Cardiac septum (tissue), 1 donor: ENCODE measurements at regions of chr5 and their contacts with region 1.

Region 1: DNA sequence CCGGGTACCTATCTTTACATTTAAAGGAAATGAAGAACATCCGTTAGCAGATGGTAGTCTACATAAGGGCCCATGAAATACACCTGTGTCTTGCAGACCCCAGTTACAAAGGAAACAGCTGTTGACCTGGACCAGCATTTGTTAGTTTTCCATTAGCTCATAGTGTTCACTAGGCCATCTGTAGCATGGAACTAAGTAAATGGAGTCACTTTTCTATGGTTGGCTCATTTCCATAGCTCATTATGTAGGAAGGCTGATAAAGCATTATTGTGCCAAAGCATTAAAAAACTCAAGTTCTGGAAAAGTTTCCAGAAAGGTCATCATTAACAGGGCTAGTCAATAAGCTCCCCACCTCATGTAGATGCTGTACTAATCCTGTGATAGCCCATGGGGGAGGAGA is 62.1 kb downstream of the PCSK1 start:
- DNase-seq: no peak

Region 2: DNA sequence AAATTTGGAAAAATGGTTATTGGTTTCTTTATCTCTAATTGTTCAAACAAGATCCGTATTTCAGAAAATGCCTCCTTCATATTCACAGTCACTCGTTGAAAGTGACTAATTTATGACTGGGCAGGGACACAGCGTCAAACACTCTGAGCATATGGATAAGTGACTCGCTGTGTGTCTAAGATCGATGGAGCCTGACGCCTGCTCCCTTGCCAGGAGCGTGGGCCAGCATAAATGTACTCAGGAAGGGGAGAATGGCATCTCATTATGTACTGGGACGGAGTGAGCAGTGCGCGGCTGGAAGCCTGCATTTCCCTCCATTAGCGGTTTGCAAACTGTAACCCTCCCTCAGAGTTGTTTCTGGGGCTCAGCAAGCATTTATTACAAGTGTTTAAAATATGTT is 211.4 kb after region 1 on chr5:
- intact Hi-C with region 1: loop called (anchors 5 kb)
- DNase-seq: no peak